ENCODE measurements at regions of chr4 and their contacts with region 1.

Region 1: GRCh38 chr4:175456131-175456530 is 355.9 kb downstream of the GPM6A start:
- DNase-seq: no peak
- H3K4me3 ChIP-seq: no peak overlapping the region
- H3K27me3 ChIP-seq: no peaks in the 10 kb centered on the region
- CTCF ChIP-seq: no peak

Region 2: GRCh38 chr4:175386776-175387507 is 69.2 kb before region 1 on chr4:
- CTCF ChIA-PET with region 1: no interaction called
- POLR2A ChIA-PET with region 1: no interaction called
- DNase-seq: no peak
- H3K4me3 ChIP-seq: no peak overlapping the region
- H3K27me3 ChIP-seq: no peaks in the 10 kb centered on the region
- CTCF ChIP-seq: no peak

Region 3: GRCh38 chr4:175412746-175413145 is 43.4 kb before region 1 on chr4:
- CTCF ChIA-PET with region 1: no interaction called
- POLR2A ChIA-PET with region 1: no interaction called
- DNase-seq: peak; percentile 74
- H3K4me3 ChIP-seq: no peak overlapping the region
- H3K27me3 ChIP-seq: no peaks in the 10 kb centered on the region
- CTCF ChIP-seq: no peak

Region 4: GRCh38 chr4:175443547-175443946 is 12.6 kb before region 1 on chr4:
- CTCF ChIA-PET with region 1: no interaction called
- POLR2A ChIA-PET with region 1: interaction called, 10 read pairs
- DNase-seq: no peak
- H3K4me3 ChIP-seq: no peak overlapping the region
- H3K27me3 ChIP-seq: no peaks in the 10 kb centered on the region
- CTCF ChIP-seq: 0 out of 2 replicates have a peak, but pooled peaks have one; percentile 11

Measured in BJ (cell line).